ENCODE measurements at regions of chr10 and their contacts with region 1.

Region 1: GRCh38 chr10:62050893-62051433 is 149.5 kb downstream of the ARID5B start:
- DNase-seq: peak; percentile 96
- ATAC-seq: peak; percentile 35
- H3K4me3 ChIP-seq: peak overlapping the region; percentile 62
- H3K27ac ChIP-seq: peak overlapping the region; percentile 83
- H3K4me1 ChIP-seq: peaks cover 22% of the 10 kb centered on the region
- H3K27me3 ChIP-seq: no peaks in the 10 kb centered on the region
- CTCF ChIP-seq: no peak
- POLR2A ChIP-seq: peak; percentile 94
- RAD21 ChIP-seq: no peak

Region 2: GRCh38 chr10:60816628-60817397 is 1234.2 kb before region 1 on chr10:
- CTCF ChIA-PET with region 1: no interaction called
- POLR2A ChIA-PET with region 1: no interaction called
- dilution Hi-C with region 1: no loop called
- in situ Hi-C with region 1: loop called (anchors 25 kb)
- intact Hi-C with region 1: loop called (anchors 10 kb)
- DNase-seq: peak; percentile 90
- ATAC-seq: peak; percentile 91
- H3K4me3 ChIP-seq: no peak overlapping the region
- H3K27ac ChIP-seq: no peak overlapping the region
- H3K4me1 ChIP-seq: peaks cover 13% of the 10 kb centered on the region
- H3K27me3 ChIP-seq: no peaks in the 10 kb centered on the region
- CTCF ChIP-seq: peak; percentile 91
- POLR2A ChIP-seq: peak; percentile 44; the same call in 1 of the 2 replicates
- RAD21 ChIP-seq: peak; percentile 94

Region 3: DNA sequence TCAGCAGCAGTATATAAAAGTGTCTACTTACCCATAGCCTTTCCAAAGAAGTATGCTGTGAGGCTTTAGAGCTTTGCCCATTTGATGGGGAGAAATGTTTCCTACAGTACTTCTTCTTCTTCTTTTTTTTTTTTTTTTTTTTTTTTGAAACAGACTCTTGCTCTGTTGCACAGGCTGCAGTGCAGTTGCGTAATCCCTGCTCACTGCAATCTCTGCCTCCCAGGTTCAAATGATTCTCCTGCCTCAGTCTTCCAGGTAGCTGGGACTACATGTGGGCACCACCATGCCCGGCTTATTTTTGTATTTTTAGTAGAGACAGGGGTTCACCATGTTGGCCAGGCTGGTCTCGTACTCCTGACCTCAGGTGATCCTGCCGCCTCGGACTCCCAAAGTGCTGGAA is 496.0 kb before region 1 on chr10:
- CTCF ChIA-PET with region 1: no interaction called
- POLR2A ChIA-PET with region 1: no interaction called
- dilution Hi-C with region 1: no loop called
- in situ Hi-C with region 1: no loop called
- intact Hi-C with region 1: no loop called
- DNase-seq: no peak
- ATAC-seq: no peak
- H3K4me3 ChIP-seq: no peak overlapping the region
- H3K27ac ChIP-seq: no peak overlapping the region
- H3K4me1 ChIP-seq: no peaks in the 10 kb centered on the region
- H3K27me3 ChIP-seq: no peaks in the 10 kb centered on the region
- CTCF ChIP-seq: no peak
- POLR2A ChIP-seq: no peak
- RAD21 ChIP-seq: no peak

Region 4: GRCh38 chr10:61750929-61751471 is 300.0 kb before region 1 on chr10:
- CTCF ChIA-PET with region 1: no interaction called
- POLR2A ChIA-PET with region 1: interaction called, 6 read pairs
- dilution Hi-C with region 1: no loop called
- in situ Hi-C with region 1: no loop called
- intact Hi-C with region 1: loop called (anchors 10 kb)
- DNase-seq: peak; percentile 69
- ATAC-seq: peak; percentile 50
- H3K4me3 ChIP-seq: no peak overlapping the region
- H3K27ac ChIP-seq: peak overlapping the region; percentile 77
- H3K4me1 ChIP-seq: peaks cover 12% of the 10 kb centered on the region
- H3K27me3 ChIP-seq: no peaks in the 10 kb centered on the region
- CTCF ChIP-seq: peak; percentile 70
- POLR2A ChIP-seq: no peak
- RAD21 ChIP-seq: peak; percentile 80

Region 5: DNA sequence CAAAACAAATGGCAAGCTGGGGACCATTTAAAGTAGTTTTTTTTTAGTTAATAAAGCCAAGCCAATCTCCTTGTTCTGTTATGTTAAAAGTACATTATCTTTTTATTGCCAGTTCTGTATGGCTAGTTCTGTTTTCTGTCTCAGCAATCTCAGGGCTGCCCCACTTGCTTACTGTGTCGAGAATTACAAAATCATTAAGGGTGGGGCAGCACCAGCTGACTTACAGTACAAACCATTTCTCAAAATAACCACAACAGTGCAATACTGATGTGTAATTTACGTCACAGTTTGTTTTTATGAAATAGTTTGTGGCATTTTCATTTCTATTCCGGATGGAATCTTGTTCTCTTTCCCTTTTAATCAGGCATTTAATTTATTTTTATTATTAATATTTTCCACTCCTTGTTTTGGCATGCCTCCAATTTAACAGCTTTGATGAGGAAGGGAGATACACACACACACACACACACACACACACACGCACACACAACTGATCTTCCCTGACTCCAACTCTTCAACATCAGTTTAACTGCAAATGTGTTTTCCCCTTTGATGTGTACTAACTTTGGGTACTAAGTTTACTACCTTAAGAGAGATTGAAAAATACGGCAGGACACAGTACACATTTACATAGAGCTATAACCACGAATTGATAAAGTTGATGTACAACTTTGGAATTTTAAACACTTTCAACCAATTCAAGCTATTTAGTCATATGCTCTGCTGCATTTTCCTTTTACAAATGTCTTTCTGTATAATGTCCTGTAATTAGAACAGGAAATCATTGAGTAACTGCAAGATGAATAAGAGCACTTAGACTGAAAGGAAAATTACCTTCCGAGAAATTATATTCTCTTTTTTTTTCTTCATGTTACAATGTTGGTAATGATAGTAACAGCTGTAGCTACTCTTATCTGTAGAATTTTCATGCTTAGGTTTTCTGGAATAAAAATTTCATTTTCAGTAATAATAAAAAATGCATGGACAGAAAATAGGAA is 58.0 kb before region 1 on chr10:
- CTCF ChIA-PET with region 1: no interaction called
- POLR2A ChIA-PET with region 1: no interaction called
- dilution Hi-C with region 1: no loop called
- in situ Hi-C with region 1: no loop called
- intact Hi-C with region 1: loop called (anchors 2 kb)
- DNase-seq: peak; percentile 88
- ATAC-seq: peak; percentile 69
- H3K4me3 ChIP-seq: peak overlapping the region; percentile 46; the same call in 1 of the 2 replicates
- H3K27ac ChIP-seq: peak overlapping the region; percentile 93
- H3K4me1 ChIP-seq: peaks cover 12% of the 10 kb centered on the region
- H3K27me3 ChIP-seq: no peaks in the 10 kb centered on the region
- CTCF ChIP-seq: no peak
- POLR2A ChIP-seq: no peak
- RAD21 ChIP-seq: no peak

Region 6: GRCh38 chr10:62038609-62039190 is 12.3 kb before region 1 on chr10:
- CTCF ChIA-PET with region 1: interaction called, 10 read pairs
- POLR2A ChIA-PET with region 1: interaction called, 9 read pairs
- dilution Hi-C with region 1: no loop called
- in situ Hi-C with region 1: no loop called
- intact Hi-C with region 1: no loop called
- DNase-seq: peak; percentile 78
- ATAC-seq: peak; percentile 33
- H3K4me3 ChIP-seq: no peak overlapping the region; the same call in 1 of the 2 replicates
- H3K27ac ChIP-seq: peak overlapping the region; percentile 96
- H3K4me1 ChIP-seq: peaks cover 28% of the 10 kb centered on the region
- H3K27me3 ChIP-seq: no peaks in the 10 kb centered on the region
- CTCF ChIP-seq: peak; percentile 84
- POLR2A ChIP-seq: 0 out of 2 replicates have a peak, but pooled peaks have one; percentile 23
- RAD21 ChIP-seq: peak; percentile 90

Region 7: GRCh38 chr10:62073429-62073828 is 22.5 kb after region 1 on chr10:
- CTCF ChIA-PET with region 1: no interaction called
- POLR2A ChIA-PET with region 1: no interaction called
- dilution Hi-C with region 1: no loop called
- in situ Hi-C with region 1: no loop called
- intact Hi-C with region 1: no loop called
- DNase-seq: no peak
- ATAC-seq: no peak
- H3K4me3 ChIP-seq: no peak overlapping the region
- H3K27ac ChIP-seq: peak overlapping the region; percentile 49; the same call in 1 of the 2 replicates
- H3K4me1 ChIP-seq: peaks cover 42% of the 10 kb centered on the region
- H3K27me3 ChIP-seq: no peaks in the 10 kb centered on the region
- CTCF ChIP-seq: no peak
- POLR2A ChIP-seq: no peak
- RAD21 ChIP-seq: no peak

Region 8: DNA sequence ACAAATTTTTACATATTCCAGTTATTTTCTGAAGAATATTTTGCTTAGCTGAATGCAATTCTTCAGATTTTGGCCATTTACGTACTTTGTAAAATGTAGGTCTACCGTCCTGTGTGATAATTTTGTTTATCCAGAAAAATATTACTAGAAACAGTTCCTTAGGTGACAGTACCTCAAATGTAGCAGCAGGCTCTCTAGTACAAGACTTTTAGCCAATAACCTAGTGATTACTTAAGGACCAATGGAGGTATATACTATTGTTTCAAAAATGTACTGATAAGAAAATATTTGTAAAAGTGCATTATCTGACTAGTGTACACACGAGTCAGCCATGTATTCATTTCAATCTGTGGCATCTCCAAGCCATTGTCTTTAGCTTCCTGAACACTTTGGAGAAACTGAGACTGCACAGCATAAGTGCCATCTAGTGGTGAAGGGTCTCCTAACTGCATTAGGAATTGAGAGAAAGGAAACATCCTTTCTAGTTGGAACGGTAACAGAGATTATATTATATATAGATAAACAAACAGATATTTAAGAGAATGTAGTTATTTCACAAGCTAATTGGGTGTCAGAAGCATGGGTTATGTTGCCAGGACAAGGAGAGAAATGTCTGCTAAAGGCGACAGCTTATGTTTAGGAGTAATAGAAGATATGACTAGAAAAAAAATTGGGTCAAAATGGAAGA is 194.0 kb after region 1 on chr10:
- CTCF ChIA-PET with region 1: interaction called, 8 read pairs
- POLR2A ChIA-PET with region 1: interaction called, 12 read pairs
- dilution Hi-C with region 1: no loop called
- in situ Hi-C with region 1: no loop called
- intact Hi-C with region 1: no loop called
- DNase-seq: peak; percentile 83
- ATAC-seq: peak; percentile 63
- H3K4me3 ChIP-seq: no peak overlapping the region; the same call in 1 of the 2 replicates
- H3K27ac ChIP-seq: peak overlapping the region; percentile 92
- H3K4me1 ChIP-seq: peaks cover 6% of the 10 kb centered on the region
- H3K27me3 ChIP-seq: no peaks in the 10 kb centered on the region
- CTCF ChIP-seq: peak; percentile 88
- POLR2A ChIP-seq: no peak
- RAD21 ChIP-seq: peak; percentile 93

Measured in IMR-90 (cell line).